Heart right ventricle (tissue), 16 donors: ENCODE measurements at regions of chr7 and their contacts with region 1.

Region 1: DNA sequence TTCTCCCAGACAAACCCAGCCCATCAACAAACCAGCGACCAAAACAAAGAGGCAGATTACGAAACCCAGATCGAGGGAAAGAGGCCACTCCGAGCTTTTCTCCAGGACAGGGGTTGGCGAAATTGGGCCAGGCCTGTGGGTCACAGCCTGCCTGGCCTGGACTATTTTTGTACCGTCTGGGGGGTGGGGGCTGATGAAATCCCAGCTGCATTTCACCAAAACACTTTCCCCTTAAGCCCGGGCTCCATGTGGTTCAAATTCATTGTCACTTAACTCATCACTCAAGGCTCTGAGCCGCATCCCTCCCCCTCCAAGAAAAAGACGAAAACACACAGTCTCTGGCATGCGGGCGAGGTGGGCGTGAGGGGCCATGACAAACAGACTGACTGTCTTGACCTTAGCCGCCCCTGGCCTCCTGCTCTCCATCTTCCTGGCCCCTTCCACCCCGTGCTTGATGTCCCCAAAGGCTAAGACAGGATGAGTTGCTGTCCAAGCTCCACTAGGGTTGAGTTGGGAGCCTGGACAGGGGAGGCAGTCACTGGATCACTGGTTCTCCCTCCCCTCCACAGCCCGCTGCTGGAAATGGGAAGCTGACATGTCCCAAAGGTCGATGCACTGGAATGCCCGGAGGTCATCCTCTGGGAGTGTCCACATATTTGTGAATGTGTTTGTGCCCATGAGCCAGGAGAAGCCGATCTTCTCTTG is 19.2 kb downstream of the TMEM270 start:
- DNase-seq: peak in 1 of 2 donors; percentile 66
- ATAC-seq: peak; percentile 29 to 82 (median 54)
- H3K4me3 ChIP-seq: no peak overlapping the region
- H3K27ac ChIP-seq: peak overlapping the region in 9 of 10 donors; percentile 19 to 90 (median 78)
- H3K4me1 ChIP-seq: peaks cover 25 to 50% (median 31%) of the 10 kb centered on the region in 9 donors
- H3K27me3 ChIP-seq: peaks cover 0 to 10% (median 0%) of the 10 kb centered on the region in 7 donors
- CTCF ChIP-seq: no peak

Region 2: DNA sequence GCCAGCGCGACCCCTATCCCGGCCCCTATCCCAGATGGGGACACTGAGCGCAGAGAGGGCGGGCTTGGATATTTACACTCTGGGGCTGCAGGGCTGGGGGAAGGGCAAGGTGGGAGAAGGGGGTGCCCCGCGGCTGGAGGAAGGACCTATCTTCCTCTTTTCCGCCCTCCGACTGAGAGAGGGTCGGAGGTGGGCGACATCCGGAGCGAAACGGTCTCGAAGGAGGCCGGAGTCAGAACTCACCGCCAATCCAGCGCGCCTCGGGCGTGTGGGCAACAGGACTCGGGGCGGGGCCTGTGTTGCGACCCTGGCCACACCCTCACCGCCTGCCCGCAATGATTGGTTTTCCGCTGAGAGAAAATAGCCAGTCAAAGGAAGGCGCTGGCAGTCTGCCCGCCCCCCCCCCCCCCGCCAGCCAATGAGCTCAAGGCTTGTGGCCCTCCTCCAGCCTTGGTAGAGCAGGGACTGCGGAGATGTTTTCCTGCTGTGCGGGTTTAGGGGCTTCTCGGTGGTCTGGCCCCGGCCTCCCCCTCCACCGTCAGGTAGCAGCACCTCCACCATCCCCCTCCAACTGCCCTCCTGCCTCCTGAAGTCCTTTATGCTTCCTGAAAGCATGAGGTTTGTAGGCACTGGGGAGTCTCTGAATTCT is 37.8 kb before region 1 on chr7 and contains the start of gene METTL27:
- intact Hi-C with region 1: no loop called
- DNase-seq: peak; percentile 92 to 94
- ATAC-seq: peak; percentile 94 to 98 (median 98)
- H3K4me3 ChIP-seq: peak within 1 kb of the TSS; percentile 36 to 81 (median 60)
- H3K27ac ChIP-seq: peak within 1 kb of the TSS in 6 of 10 donors; percentile 10 to 82 (median 67)
- H3K4me1 ChIP-seq: peaks cover 0 to 45% (median 14%) of the 10 kb centered on the region in 9 donors
- H3K27me3 ChIP-seq: peaks cover 0 to 6% (median 0%) of the 10 kb centered on the region in 7 donors
- CTCF ChIP-seq: no peak
- total RNA-seq, gene METTL27: 0.31 to 1.3 (median 0.47) TPM in 8 of 10 donors, not detected in the others

Region 3: GRCh38 chr7:73978661-73979563 is 98.8 kb after region 1 on chr7:
- intact Hi-C with region 1: loop called in 1 of 10 experiments (anchors 10 kb)
- DNase-seq: peak; percentile 41 to 46
- ATAC-seq: peak in 7 of 8 donors; percentile 42 to 73 (median 61)
- H3K4me3 ChIP-seq: no peak overlapping the region
- H3K27ac ChIP-seq: no peak overlapping the region
- H3K4me1 ChIP-seq: peaks cover 0 to 17% (median 11%) of the 10 kb centered on the region in 9 donors
- H3K27me3 ChIP-seq: no peaks in the 10 kb centered on the region
- CTCF ChIP-seq: peak; percentile 10 to 52 (median 41)

Region 4: DNA sequence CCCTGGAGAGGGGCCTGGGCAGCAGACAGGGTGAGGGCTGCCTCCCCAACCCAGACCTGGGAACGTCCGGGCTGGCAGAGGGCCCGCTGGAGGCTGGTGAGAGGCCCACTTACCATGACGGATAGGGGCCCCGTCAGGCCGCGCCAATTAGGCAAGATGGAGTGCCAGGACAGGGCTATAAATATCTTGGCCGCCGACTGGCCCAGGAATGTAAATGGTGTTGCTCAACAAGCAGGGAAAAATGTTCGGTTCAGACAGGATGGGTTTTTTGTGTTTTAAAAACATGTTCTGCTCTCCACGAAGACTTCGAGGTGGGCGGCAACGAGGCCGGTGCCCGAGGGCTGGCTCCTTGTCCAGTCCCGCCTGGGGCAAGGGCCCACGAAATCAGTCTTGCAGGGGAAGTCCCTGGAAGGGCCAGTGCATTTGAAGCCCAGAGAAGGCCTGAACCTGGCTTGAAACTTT is 112.0 kb after region 1 on chr7:
- intact Hi-C with region 1: no loop called
- DNase-seq: peak in 1 of 2 donors; percentile 64
- ATAC-seq: peak; percentile 38 to 62 (median 48)
- H3K4me3 ChIP-seq: no peak overlapping the region
- H3K27ac ChIP-seq: peak overlapping the region in 5 of 10 donors; percentile 3 to 41 (median 25)
- H3K4me1 ChIP-seq: peaks cover 0 to 14% (median 5%) of the 10 kb centered on the region in 9 donors
- H3K27me3 ChIP-seq: peaks cover 0 to 3% (median 0%) of the 10 kb centered on the region in 7 donors
- CTCF ChIP-seq: no peak

Region 5: GRCh38 chr7:74206589-74207120 is 326.5 kb after region 1 on chr7:
- intact Hi-C with region 1: loop called in 1 of 10 experiments (anchors 10 kb)
- DNase-seq: peak; percentile 87 to 91
- ATAC-seq: peak; percentile 80 to 89 (median 85)
- H3K4me3 ChIP-seq: peak overlapping the region in 6 of 10 donors; percentile 22 to 43 (median 30)
- H3K27ac ChIP-seq: no peak overlapping the region
- H3K4me1 ChIP-seq: peaks cover 0 to 33% (median 0%) of the 10 kb centered on the region in 9 donors
- H3K27me3 ChIP-seq: no peaks in the 10 kb centered on the region
- CTCF ChIP-seq: peak; percentile 87 to 99 (median 98)